ENCODE measurements at regions of chr10 and their contacts with region 1.

Region 1: GRCh38 chr10:48523820-48524758 is 80.8 kb downstream of the ARHGAP22 start:
- DNase-seq: no peak
- ATAC-seq: peak; percentile 79
- H3K4me3 ChIP-seq: peak overlapping the region; percentile 54 to 70
- H3K27ac ChIP-seq: peak overlapping the region; percentile 60
- H3K4me1 ChIP-seq: peaks cover 6 to 10% of the 10 kb centered on the region in 2 experiments; a peak in 3 of 4 replicates
- H3K27me3 ChIP-seq: no peaks in the 10 kb centered on the region
- CTCF ChIP-seq: peak; percentile 39 to 81 (median 74); a peak in 5 of 6 replicates
- POLR2A ChIP-seq: peak; percentile 25
- RAD21 ChIP-seq: peak; percentile 29; the same call in 1 of the 2 replicates

Region 2: DNA sequence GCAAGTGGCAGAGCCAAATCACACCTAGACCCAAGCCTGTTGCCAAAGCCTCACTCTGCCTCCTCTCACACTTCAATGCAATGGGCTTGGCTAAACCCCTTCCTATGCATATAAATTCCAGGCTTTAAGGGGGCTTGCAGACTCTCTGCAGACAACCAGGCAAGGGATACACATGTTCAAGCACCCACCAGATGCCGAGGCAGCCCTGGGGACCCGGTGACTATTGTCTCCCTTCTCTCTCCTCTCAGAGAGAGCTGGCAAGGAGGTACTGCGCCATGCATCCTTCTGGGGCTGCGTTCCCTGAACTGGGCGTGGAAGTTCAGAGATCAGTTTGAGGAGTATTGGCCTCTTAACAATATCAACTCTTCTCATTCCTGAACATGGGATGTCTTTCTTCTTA is 50.4 kb before region 1 on chr10:
- CTCF ChIA-PET with region 1: no interaction called
- POLR2A ChIA-PET with region 1: no interaction called
- RAD21 ChIA-PET with region 1: no interaction called
- intact Hi-C with region 1: loop called (anchors 2 kb)
- DNase-seq: no peak
- ATAC-seq: no peak
- H3K4me3 ChIP-seq: no peak overlapping the region
- H3K27ac ChIP-seq: no peak overlapping the region
- H3K4me1 ChIP-seq: peaks cover 0 to 4% of the 10 kb centered on the region in 2 experiments; a peak in 1 of 4 replicates
- H3K27me3 ChIP-seq: no peaks in the 10 kb centered on the region
- CTCF ChIP-seq: no peak
- POLR2A ChIP-seq: no peak
- RAD21 ChIP-seq: no peak

Region 3: GRCh38 chr10:48608279-48608681 is 84.2 kb after region 1 on chr10:
- CTCF ChIA-PET with region 1: no interaction called
- POLR2A ChIA-PET with region 1: no interaction called
- RAD21 ChIA-PET with region 1: no interaction called
- intact Hi-C with region 1: no loop called
- DNase-seq: peak; percentile 34
- ATAC-seq: peak; percentile 79
- H3K4me3 ChIP-seq: no peak overlapping the region
- H3K27ac ChIP-seq: no peak overlapping the region
- H3K4me1 ChIP-seq: peaks cover 6 to 31% of the 10 kb centered on the region in 2 experiments
- H3K27me3 ChIP-seq: no peaks in the 10 kb centered on the region
- CTCF ChIP-seq: peak; percentile 63 to 93 (median 79)
- POLR2A ChIP-seq: no peak
- RAD21 ChIP-seq: peak; percentile 40; the same call in 1 of the 2 replicates

Measured in HCT116 (cell line).